Aorta (tissue), 5 donors: ENCODE measurements at regions of chr2 and their contacts with region 1.

Region 1: GRCh38 chr2:149587220-149587949 is at the start of gene MMADHC:
- DNase-seq: peak; percentile 97 to 98
- ATAC-seq: peak; percentile 98
- H3K4me3 ChIP-seq: peak within 1 kb of the TSS; percentile 84 to 86
- H3K27ac ChIP-seq: peak within 1 kb of the TSS; percentile 79 to 97
- H3K4me1 ChIP-seq: peaks cover 2 to 4% of the 10 kb centered on the region in 2 donors
- H3K27me3 ChIP-seq: no peaks in the 10 kb centered on the region
- total RNA-seq, gene MMADHC: 67.3 to 82.8 TPM

Region 2: GRCh38 chr2:150610671-150611279 is 1023.4 kb after region 1 on chr2:
- intact Hi-C with region 1: loop called (anchors 5 kb)
- DNase-seq: no peak
- ATAC-seq: no peak
- H3K4me3 ChIP-seq: no peak overlapping the region
- H3K27ac ChIP-seq: no peak overlapping the region
- H3K4me1 ChIP-seq: no peaks in the 10 kb centered on the region
- H3K27me3 ChIP-seq: no peaks in the 10 kb centered on the region

Region 3: DNA sequence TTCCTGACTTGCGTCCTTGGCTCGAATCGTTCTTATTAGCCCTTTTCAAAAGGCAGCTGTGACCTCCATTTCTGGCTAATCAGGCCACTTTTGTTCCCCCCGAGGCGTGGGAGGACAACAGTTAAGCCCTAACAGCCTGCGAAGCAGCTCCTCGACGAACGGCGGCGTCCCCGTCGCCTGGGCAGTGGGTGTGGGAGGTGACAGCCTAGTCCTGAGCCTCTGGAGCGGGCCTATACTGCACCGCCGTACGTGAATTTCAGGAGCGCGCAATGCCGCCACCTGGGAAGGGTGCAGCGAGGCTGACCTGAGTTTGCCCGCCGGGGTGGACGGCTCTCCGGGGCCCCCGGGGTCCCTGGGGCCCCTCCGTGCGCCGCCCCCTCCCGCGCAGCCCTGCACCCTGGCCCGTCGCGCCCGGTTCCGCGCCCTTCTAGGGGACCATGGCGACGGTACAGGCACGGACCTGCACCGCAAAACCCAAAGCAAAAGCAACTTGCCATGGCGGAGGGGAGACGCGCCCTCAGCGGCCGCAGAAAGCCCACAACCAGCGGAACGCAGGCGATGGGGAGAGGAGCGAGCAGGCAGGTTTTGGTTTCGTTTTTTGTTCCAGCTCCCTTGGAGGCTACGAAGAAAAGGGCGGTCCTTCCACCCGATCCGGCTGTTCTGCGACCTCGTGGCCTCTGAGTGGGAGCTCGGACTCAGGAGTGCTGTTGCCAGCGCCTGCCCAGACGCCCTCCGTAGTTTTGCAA is 1674.0 kb after region 1 on chr2 and contains the start of gene RBM43:
- intact Hi-C with region 1: loop called in 1 of 2 experiments (anchors 10 kb)
- DNase-seq: peak; percentile 95
- ATAC-seq: peak; percentile 96
- H3K4me3 ChIP-seq: peak within 1 kb of the TSS; percentile 66 to 69
- H3K27ac ChIP-seq: peak within 1 kb of the TSS; percentile 23 to 87
- H3K4me1 ChIP-seq: no peaks in the 10 kb centered on the region
- H3K27me3 ChIP-seq: no peaks in the 10 kb centered on the region
- total RNA-seq, gene RBM43: 3.7 to 11.7 TPM